Heart right ventricle (tissue), 16 donors: ENCODE measurements at regions of chr4 and their contacts with region 1.

Region 1: DNA sequence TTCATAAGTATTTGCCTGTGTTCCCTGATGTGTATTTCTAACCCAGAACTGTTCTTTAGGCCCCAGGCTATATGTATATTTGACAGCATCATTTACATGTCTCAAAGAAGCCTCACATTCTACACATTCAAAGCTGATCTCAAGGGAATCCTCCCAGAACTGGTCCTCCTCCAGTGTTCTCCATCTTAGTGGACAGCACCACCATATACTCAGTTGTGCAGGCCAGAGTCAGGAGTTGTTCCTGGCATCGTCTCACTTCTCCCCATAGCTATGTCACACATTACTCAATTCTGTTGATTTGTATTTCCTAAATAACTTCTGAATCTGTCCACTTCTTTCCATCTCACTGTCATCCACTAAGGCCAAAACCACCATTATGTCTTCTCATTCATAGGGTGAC is 82.8 kb upstream of the TRPC3 start:
- DNase-seq: no peak
- ATAC-seq: no peak
- H3K4me3 ChIP-seq: no peak overlapping the region
- H3K27ac ChIP-seq: no peak overlapping the region
- H3K4me1 ChIP-seq: no peaks in the 10 kb centered on the region
- H3K27me3 ChIP-seq: no peaks in the 10 kb centered on the region
- CTCF ChIP-seq: no peak

Region 2: DNA sequence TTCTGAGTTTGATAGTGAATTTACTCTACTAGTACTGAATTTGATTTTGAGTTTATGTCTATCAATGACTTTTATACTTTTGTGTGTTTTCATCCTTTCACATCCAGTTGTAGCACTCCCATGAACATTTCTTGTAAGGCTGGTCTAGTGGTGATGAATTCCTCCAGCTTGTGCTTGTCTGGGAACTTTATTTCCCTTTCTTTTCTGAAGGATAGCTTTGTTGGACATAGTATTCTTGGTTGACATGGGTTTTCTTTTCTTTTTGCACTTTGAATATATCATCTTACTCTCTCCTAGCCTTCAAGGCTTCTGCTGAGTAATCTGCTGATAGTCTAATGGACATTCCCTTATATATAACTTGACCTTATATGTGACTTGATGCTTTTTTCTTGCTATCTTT is 454.4 kb after region 1 on chr4:
- intact Hi-C with region 1: loop called in 1 of 10 experiments (anchors 5 kb)
- DNase-seq: no peak
- ATAC-seq: no peak
- H3K4me3 ChIP-seq: no peak overlapping the region
- H3K27ac ChIP-seq: no peak overlapping the region
- H3K4me1 ChIP-seq: no peaks in the 10 kb centered on the region
- H3K27me3 ChIP-seq: no peaks in the 10 kb centered on the region
- CTCF ChIP-seq: no peak